A673 (cell line): ENCODE measurements at regions of chr18 and their contacts with region 1.

Region 1: GRCh38 chr18:4004183-4004829 is 450.8 kb downstream of the DLGAP1 start:
- DNase-seq: peak; percentile 59
- H3K4me3 ChIP-seq: no peak overlapping the region
- H3K27ac ChIP-seq: peak overlapping the region; percentile 59
- H3K4me1 ChIP-seq: peaks cover 31% of the 10 kb centered on the region
- H3K27me3 ChIP-seq: no peaks in the 10 kb centered on the region
- CTCF ChIP-seq: no peak

Region 2: DNA sequence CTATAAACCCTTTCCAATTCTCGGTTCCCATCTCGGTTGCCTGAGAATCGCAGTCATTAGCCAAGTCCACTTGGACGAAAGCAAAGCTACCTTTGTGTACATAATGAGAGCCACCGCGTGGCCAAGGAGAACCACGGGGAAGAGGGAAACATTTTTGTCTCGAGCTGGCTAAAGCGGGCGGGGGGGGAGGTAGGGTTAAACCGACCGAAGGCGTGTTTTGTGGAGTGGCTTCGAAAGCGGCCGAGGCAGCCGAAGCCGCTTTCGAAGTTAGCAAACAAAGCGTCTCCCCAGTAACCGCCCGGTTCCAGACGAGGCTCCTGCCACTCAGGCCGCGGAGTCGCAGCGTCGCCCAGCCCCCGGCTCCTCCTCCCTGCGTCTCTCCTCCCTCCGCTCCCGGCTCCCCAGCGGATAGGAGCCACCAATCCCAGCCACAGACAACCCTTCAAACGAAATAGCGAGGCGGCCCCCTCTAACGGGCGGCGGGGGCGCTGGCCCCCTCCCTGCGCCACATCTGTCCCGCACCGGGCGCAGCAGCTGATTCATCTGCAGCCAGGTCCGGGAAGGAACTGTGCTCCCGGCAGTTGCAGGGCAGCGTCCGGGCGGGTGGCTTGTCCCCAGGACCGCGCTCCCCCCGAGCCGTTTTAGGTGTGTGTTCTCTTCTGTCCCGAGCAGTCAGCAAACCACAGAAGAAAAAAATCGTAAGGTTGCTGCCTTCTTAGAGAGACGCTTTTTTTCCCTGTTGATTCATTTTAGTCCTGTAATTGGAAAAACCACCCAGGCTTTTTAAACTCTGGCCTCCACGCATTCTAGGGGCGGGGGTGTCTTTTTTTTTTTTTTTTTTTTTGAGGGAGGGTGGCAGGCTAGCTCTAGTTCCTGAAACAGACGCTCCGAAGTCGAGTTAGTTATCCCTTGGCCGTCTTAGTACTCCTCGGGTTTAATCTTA is 556.1 kb before region 1 on chr18:
- CTCF ChIA-PET with region 1: no interaction called
- POLR2A ChIA-PET with region 1: no interaction called
- intact Hi-C with region 1: loop called (anchors 5 kb)
- DNase-seq: peak; percentile 99
- H3K4me3 ChIP-seq: peak overlapping the region; percentile 91
- H3K27ac ChIP-seq: peak overlapping the region; percentile 96
- H3K4me1 ChIP-seq: peaks cover 23% of the 10 kb centered on the region
- H3K27me3 ChIP-seq: no peaks in the 10 kb centered on the region
- CTCF ChIP-seq: 0 out of 2 replicates have a peak, but pooled peaks have one; percentile 15

Region 3: DNA sequence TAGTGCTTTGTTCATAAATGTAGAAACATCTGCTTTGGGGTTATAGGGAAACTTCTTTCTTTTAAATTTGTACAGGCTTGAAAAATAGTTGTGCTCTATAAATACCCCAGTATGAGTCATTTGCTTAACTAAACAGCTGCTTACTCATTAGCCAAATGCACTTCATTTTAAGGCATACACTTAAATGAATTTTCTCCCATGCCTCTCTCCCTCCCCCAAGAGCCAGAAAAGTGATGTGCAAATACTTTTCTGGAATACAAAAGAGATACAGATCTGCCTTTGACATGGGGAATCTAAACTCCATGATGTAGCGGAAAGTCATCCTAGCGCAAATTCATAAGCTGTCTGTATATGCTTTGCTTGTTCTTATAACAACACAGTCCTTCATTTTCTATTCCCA is 18.6 kb before region 1 on chr18:
- CTCF ChIA-PET with region 1: no interaction called
- POLR2A ChIA-PET with region 1: no interaction called
- intact Hi-C with region 1: no loop called
- DNase-seq: no peak
- H3K4me3 ChIP-seq: no peak overlapping the region
- H3K27ac ChIP-seq: no peak overlapping the region
- H3K4me1 ChIP-seq: peaks cover 28% of the 10 kb centered on the region
- H3K27me3 ChIP-seq: no peaks in the 10 kb centered on the region
- CTCF ChIP-seq: no peak

Region 4: DNA sequence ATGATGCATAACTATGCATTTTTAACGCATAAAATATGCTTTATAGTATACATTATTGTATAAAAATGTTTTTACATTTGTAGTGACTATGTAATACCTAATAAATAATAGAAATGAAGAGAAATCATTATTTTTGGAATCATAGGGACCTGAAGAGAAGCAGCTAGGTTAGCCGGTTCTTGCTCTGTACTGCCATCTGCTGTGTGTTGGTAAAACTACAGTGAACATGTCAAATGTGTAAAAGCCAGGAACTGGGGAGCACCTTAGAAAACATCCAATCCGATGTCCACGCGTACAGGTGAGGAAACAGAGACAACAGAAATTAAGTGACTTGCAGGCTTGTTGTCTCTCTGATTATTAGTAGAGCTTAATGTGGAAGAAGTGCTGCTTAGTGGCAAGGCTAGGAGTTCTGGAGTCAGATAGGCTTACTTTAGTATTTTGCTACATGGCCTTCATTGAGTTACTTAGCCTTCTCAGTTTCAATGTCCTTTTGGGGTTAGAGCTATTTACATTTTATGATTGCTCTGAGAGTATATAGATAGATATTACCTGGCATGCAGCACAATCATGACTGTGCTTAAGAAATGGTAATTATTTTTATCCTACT is 64.3 kb after region 1 on chr18:
- CTCF ChIA-PET with region 1: no interaction called
- POLR2A ChIA-PET with region 1: no interaction called
- intact Hi-C with region 1: loop called (anchors 10 kb)
- DNase-seq: peak; percentile 73
- H3K4me3 ChIP-seq: no peak overlapping the region
- H3K27ac ChIP-seq: peak overlapping the region; percentile 21
- H3K4me1 ChIP-seq: no peaks in the 10 kb centered on the region
- H3K27me3 ChIP-seq: no peaks in the 10 kb centered on the region
- CTCF ChIP-seq: peak; percentile 82

Region 5: GRCh38 chr18:4084382-4084900 is 80.1 kb after region 1 on chr18:
- CTCF ChIA-PET with region 1: no interaction called
- POLR2A ChIA-PET with region 1: no interaction called
- intact Hi-C with region 1: no loop called
- DNase-seq: no peak
- H3K4me3 ChIP-seq: no peak overlapping the region
- H3K27ac ChIP-seq: no peak overlapping the region
- H3K4me1 ChIP-seq: no peaks in the 10 kb centered on the region
- H3K27me3 ChIP-seq: no peaks in the 10 kb centered on the region
- CTCF ChIP-seq: no peak